CD8-positive, alpha-beta T cell (primary cell): ENCODE measurements at regions of chr17 and their contacts with region 1.

Region 1: GRCh38 chr17:32461853-32462617 is 17.7 kb downstream of the PSMD11 start:
- DNase-seq: peak; percentile 40 to 81 (median 67)
- ATAC-seq: peak; percentile 91
- H3K4me3 ChIP-seq: no peak overlapping the region
- H3K4me3 Mint-ChIP-seq: no peak overlapping the region
- H3K27ac ChIP-seq: no peak overlapping the region
- H3K27ac Mint-ChIP-seq: peak overlapping the region; percentile 38
- H3K4me1 ChIP-seq: peaks cover 4% of the 10 kb centered on the region
- H3K4me1 Mint-ChIP-seq: peaks cover 23% of the 10 kb centered on the region
- H3K27me3 ChIP-seq: no peaks in the 10 kb centered on the region
- H3K27me3 Mint-ChIP-seq: no peaks in the 10 kb centered on the region
- CTCF ChIP-seq: peak; percentile 56

Region 2: DNA sequence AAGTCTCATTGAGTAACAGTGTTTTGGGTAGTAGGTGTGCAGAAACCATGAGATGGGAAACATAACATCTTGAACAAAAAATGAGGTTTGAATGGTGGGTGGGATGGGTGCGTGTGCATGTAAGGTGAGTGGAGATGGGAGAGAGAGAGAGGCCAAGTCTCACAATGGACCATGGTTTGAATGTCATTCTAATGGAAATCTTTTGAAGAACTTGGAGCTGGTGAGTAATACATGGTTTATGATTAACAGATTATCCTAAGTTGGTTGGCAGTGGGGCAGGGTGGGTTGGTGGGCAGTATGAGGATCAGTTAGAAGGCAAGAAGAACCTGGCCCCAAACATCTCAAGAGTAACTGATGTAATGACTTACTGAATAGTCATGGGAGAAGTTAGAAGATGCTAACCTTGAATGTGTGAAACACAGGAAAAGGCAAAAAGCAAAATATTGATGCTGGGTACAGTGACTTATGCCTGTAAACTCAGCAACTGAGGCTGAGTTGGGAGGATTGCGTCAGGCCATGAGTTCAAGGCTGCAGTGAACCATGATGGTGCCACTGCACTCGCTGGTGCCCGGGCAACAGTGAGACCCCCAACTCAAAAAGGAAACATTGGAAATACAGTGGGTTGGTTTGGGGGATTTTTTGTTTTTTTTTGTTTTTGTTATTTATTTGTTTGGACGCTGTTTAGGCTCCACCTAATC is 79.4 kb before region 1 on chr17:
- CTCF ChIA-PET with region 1: no interaction called
- POLR2A ChIA-PET with region 1: no interaction called
- intact Hi-C with region 1: no loop called
- DNase-seq: no peak
- ATAC-seq: no peak
- H3K4me3 ChIP-seq: no peak overlapping the region
- H3K4me3 Mint-ChIP-seq: no peak overlapping the region
- H3K27ac ChIP-seq: no peak overlapping the region
- H3K27ac Mint-ChIP-seq: peak overlapping the region; percentile 15
- H3K4me1 ChIP-seq: no peaks in the 10 kb centered on the region
- H3K4me1 Mint-ChIP-seq: peaks cover 5% of the 10 kb centered on the region
- H3K27me3 ChIP-seq: no peaks in the 10 kb centered on the region
- H3K27me3 Mint-ChIP-seq: no peaks in the 10 kb centered on the region
- CTCF ChIP-seq: no peak

Region 3: GRCh38 chr17:32477220-32477619 is 15.2 kb after region 1 on chr17:
- CTCF ChIA-PET with region 1: interaction called, 120 read pairs
- POLR2A ChIA-PET with region 1: no interaction called
- intact Hi-C with region 1: loop called in 1 of 2 experiments (anchors 2 kb)
- DNase-seq: no peak
- ATAC-seq: no peak
- H3K4me3 ChIP-seq: no peak overlapping the region
- H3K4me3 Mint-ChIP-seq: no peak overlapping the region
- H3K27ac ChIP-seq: no peak overlapping the region
- H3K27ac Mint-ChIP-seq: no peak overlapping the region
- H3K4me1 ChIP-seq: no peaks in the 10 kb centered on the region
- H3K4me1 Mint-ChIP-seq: no peaks in the 10 kb centered on the region
- H3K27me3 ChIP-seq: no peaks in the 10 kb centered on the region
- H3K27me3 Mint-ChIP-seq: no peaks in the 10 kb centered on the region
- CTCF ChIP-seq: no peak

Region 4: DNA sequence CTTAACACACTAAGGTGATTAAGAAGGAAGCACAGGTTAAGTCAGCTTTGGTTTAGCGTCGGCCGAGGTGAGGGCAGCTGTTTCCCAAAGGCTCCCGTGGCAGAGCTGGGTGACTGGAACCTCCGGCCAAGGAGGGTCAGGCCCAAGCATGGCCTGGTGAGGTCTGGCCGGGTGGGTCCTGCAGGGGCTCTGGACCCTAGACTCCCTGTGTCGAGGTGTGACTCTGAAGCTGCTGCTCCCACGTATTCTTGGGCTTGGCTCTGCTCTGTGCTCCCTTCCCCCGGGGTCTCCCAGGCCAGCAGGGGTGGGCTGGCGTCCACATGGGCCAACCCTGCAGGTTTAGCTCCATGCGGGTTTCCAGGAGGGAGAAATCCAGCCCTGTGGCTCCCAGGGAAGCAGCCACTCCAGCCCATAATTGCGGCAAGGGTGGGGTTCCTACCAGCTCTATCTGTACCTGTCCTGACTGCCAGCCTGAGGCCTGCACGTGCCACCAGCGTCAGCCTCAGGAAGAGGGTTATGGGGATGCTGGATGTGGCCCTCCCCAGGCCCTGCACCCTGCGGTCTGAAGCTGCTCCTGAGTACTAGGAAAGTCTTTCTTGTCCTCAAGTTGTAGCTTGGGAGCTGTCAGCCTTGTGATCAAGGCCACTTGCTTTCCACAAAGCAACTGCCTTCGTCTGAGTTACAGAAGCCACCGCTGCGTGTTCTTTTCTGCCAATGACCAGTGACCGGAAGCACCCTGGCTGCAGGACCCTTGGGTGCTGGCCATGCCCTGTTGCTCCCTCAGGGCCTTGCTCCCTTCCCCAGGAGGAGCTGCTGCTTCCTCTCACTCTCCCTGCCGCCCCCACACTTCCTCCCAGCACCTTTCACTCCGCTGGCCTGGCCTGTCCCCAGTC is 29.6 kb after region 1 on chr17:
- CTCF ChIA-PET with region 1: interaction called, 120 read pairs
- POLR2A ChIA-PET with region 1: interaction called, 7 read pairs
- intact Hi-C with region 1: no loop called
- DNase-seq: peak in 1 of 9 experiments; percentile 56
- ATAC-seq: no peak
- H3K4me3 ChIP-seq: peak overlapping the region in 1 of 2 experiments; percentile 5
- H3K4me3 Mint-ChIP-seq: peak overlapping the region; percentile 63
- H3K27ac ChIP-seq: peak overlapping the region; percentile 9 to 44
- H3K27ac Mint-ChIP-seq: peak overlapping the region; percentile 89
- H3K4me1 ChIP-seq: peaks cover 88% of the 10 kb centered on the region
- H3K4me1 Mint-ChIP-seq: peaks cover 67% of the 10 kb centered on the region
- H3K27me3 ChIP-seq: no peaks in the 10 kb centered on the region
- H3K27me3 Mint-ChIP-seq: no peaks in the 10 kb centered on the region
- CTCF ChIP-seq: no peak

Region 5: DNA sequence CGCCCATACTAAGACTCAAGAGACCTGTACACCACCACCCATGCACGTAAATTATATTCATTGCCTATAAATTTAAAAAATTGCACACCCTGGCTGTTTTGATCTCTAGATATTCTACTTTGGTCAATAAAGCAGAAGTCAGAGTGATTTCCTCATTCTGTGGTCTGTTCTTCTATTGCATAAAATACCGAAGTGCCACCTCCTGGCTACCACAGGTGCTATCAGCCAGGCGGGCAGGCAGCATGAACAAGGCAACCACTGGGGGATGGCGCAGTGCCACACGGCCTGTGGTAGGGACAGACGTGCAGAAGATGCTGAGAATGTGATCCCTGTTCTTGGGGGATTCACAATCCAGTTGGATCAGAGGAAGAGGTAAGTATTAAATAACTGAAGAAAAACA is 147.1 kb after region 1 on chr17:
- CTCF ChIA-PET with region 1: interaction called, 25 read pairs
- POLR2A ChIA-PET with region 1: no interaction called
- intact Hi-C with region 1: loop called (anchors 1 kb)
- DNase-seq: peak; percentile 49 to 86 (median 74)
- ATAC-seq: peak; percentile 100
- H3K4me3 ChIP-seq: no peak overlapping the region
- H3K4me3 Mint-ChIP-seq: no peak overlapping the region
- H3K27ac ChIP-seq: no peak overlapping the region
- H3K27ac Mint-ChIP-seq: no peak overlapping the region
- H3K4me1 ChIP-seq: peaks cover 8% of the 10 kb centered on the region
- H3K4me1 Mint-ChIP-seq: peaks cover 6% of the 10 kb centered on the region
- H3K27me3 ChIP-seq: no peaks in the 10 kb centered on the region
- H3K27me3 Mint-ChIP-seq: no peaks in the 10 kb centered on the region
- CTCF ChIP-seq: peak; percentile 64

Region 6: GRCh38 chr17:32755045-32755805 is 293.2 kb after region 1 on chr17:
- CTCF ChIA-PET with region 1: interaction called, 16 read pairs
- POLR2A ChIA-PET with region 1: no interaction called
- intact Hi-C with region 1: loop called (anchors 1 kb)
- DNase-seq: peak in 2 of 9 experiments; percentile 60 to 71
- ATAC-seq: peak; percentile 87
- H3K4me3 ChIP-seq: no peak overlapping the region
- H3K4me3 Mint-ChIP-seq: no peak overlapping the region
- H3K27ac ChIP-seq: no peak overlapping the region
- H3K27ac Mint-ChIP-seq: no peak overlapping the region
- H3K4me1 ChIP-seq: peaks cover 8% of the 10 kb centered on the region
- H3K4me1 Mint-ChIP-seq: peaks cover 10% of the 10 kb centered on the region
- H3K27me3 ChIP-seq: no peaks in the 10 kb centered on the region
- H3K27me3 Mint-ChIP-seq: no peaks in the 10 kb centered on the region
- CTCF ChIP-seq: peak; percentile 54